ENCODE measurements at regions of chr3 and their contacts with region 1.

Region 1: GRCh38 chr3:172341482-172342059 is 106.7 kb downstream of the GHSR start:
- DNase-seq: no peak
- H3K4me3 ChIP-seq: no peak overlapping the region
- H3K27ac ChIP-seq: no peak overlapping the region
- H3K27me3 ChIP-seq: no peaks in the 10 kb centered on the region
- CTCF ChIP-seq: peak; percentile 62

Region 2: DNA sequence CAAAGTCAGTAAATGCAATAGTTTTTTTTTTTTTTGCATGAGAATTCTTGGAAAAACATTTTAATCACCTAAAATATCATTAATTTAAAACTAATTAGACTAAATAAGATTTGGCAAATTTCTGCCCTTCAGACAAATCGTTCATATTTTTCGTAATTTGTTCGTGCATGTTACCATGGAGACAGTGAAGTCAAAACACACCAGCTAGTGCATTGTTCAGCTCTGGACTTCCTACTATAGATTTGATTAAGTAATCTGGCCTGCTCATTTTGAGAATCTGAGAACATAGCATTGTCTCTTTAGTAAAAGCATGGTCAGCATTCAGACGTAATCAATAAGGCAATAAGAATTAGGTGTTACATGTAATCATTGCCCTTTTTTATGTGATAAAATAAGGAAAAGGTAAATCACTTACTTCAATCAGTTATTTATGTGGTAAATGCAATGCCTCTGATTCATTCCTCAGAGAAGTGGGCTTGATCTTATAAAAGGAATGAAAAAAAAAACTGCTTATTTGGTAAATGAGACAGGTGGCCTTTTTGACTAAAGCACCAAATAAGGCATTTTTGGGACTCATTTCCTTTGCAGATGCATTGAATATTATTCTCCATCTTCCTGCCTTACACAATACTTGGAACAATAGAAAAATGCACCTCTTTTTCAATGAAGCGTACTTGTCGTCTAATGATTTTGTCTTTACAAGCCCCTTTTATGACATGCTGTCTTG is 386.8 kb before region 1 on chr3:
- CTCF ChIA-PET with region 1: no interaction called
- POLR2A ChIA-PET with region 1: no interaction called
- DNase-seq: no peak
- H3K4me3 ChIP-seq: no peak overlapping the region
- H3K27ac ChIP-seq: no peak overlapping the region
- H3K27me3 ChIP-seq: no peaks in the 10 kb centered on the region
- CTCF ChIP-seq: no peak

Region 3: GRCh38 chr3:172039436-172040077 is 302.0 kb before region 1 on chr3 and contains the start of gene FNDC3B:
- CTCF ChIA-PET with region 1: interaction called, 10 read pairs
- POLR2A ChIA-PET with region 1: no interaction called
- DNase-seq: peak; percentile 90
- H3K4me3 ChIP-seq: peak within 1 kb of the TSS; percentile 79
- H3K27ac ChIP-seq: peak within 1 kb of the TSS; percentile 97
- H3K27me3 ChIP-seq: no peaks in the 10 kb centered on the region
- CTCF ChIP-seq: no peak
- polyA plus RNA-seq, gene FNDC3B: 39.5 and 59.0 TPM in 2 replicates

Region 4: DNA sequence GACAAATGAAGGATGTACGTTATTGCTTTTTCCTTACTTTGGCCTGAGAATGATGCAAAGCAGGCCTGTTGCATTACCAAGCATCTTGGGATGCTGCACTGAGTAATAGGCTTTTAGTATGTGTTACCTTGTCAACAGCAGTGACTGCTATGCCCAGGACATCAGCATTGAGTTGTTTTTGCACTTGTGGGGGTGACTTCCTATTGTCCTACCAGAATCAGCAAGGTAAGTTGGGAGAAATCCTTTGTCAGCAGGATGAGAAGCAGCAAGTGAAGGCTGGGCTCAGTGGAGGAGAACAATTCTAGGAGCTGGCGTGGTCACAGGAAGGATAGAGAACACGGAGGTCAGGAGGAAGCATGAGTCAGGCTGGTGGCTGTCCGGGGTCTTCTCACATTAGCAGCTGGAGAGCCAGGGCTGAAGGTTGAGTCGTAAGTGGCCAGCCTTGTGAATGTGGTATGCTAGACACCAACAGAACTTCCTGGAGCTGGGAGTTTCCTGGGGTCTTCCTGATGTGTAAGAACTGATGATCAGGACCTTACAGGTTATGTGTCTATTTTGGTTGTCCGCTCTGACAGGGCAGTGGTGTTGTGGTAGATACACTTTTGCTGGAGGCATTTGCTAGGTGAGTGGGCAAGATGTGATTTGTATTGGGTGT is 159.5 kb before region 1 on chr3:
- CTCF ChIA-PET with region 1: no interaction called
- POLR2A ChIA-PET with region 1: interaction called, 10 read pairs
- DNase-seq: no peak
- H3K4me3 ChIP-seq: no peak overlapping the region
- H3K27ac ChIP-seq: peak overlapping the region; percentile 54
- H3K27me3 ChIP-seq: no peaks in the 10 kb centered on the region
- CTCF ChIP-seq: no peak

Region 5: DNA sequence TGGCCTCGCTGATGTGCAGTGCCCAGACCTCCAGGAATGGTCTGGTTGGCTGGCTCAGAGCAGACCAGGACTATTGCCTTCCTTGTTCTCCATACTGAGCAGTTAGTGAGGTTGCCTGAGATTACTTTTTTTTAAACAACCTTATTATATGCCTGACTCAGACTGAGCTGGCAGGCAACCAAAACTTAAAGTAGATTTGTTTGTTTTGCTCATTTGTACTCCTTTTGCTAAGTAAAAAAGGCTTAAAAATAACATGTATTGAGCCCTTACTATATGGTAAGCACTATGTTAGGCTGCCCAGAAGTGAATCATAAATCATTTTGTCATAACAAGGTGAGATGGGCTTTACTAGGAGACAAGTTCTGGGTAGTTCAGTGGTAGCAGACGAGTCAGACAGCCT is 14.3 kb after region 1 on chr3:
- CTCF ChIA-PET with region 1: interaction called, 11 read pairs
- POLR2A ChIA-PET with region 1: no interaction called
- DNase-seq: peak; percentile 88
- H3K4me3 ChIP-seq: no peak overlapping the region
- H3K27ac ChIP-seq: no peak overlapping the region
- H3K27me3 ChIP-seq: no peaks in the 10 kb centered on the region
- CTCF ChIP-seq: no peak

Region 6: GRCh38 chr3:172449466-172450149 is 108.0 kb after region 1 on chr3:
- CTCF ChIA-PET with region 1: no interaction called
- POLR2A ChIA-PET with region 1: no interaction called
- DNase-seq: no peak
- H3K4me3 ChIP-seq: no peak overlapping the region
- H3K27ac ChIP-seq: no peak overlapping the region
- H3K27me3 ChIP-seq: peaks cover 52% of the 10 kb centered on the region
- CTCF ChIP-seq: no peak